Caco-2 (cell line): ENCODE measurements at regions of chr10 and their contacts with region 1.

Region 1: DNA sequence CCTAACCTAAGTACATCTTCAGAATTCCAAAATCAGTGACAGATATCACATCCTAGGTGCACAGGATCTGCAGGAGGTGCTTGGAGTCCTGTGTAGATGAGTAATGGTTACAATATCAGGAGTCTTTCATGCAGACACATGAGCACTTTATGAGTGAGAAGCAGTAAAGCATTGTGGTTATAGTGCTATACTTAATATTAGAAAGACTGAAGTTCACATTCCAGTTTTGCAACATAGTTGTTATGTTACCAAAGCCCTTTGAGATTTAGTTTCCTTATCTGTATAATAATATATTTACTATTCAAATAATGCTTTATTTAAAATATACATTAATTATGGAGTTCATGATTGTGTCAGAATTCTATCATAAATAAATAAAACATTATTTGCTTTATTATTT is 516.6 kb downstream of the NEBL start:
- DNase-seq: no peak
- H3K4me3 ChIP-seq: no peak overlapping the region
- H3K4me3 Mint-ChIP-seq: no peak overlapping the region
- H3K27ac Mint-ChIP-seq: no peak overlapping the region
- H3K4me1 ChIP-seq: no peaks in the 10 kb centered on the region
- H3K4me1 Mint-ChIP-seq: no peaks in the 10 kb centered on the region
- H3K27me3 ChIP-seq: no peaks in the 10 kb centered on the region; the same call in 1 of the 2 replicates
- H3K27me3 Mint-ChIP-seq: no peaks in the 10 kb centered on the region
- CTCF ChIP-seq: no peak

Region 2: GRCh38 chr10:20768843-20769242 is 388.4 kb after region 1 on chr10:
- CTCF ChIA-PET with region 1: no interaction called
- POLR2A ChIA-PET with region 1: no interaction called
- intact Hi-C with region 1: loop called (anchors 10 kb)
- DNase-seq: no peak
- H3K4me3 ChIP-seq: no peak overlapping the region
- H3K4me3 Mint-ChIP-seq: no peak overlapping the region
- H3K27ac Mint-ChIP-seq: no peak overlapping the region
- H3K4me1 ChIP-seq: no peaks in the 10 kb centered on the region
- H3K4me1 Mint-ChIP-seq: no peaks in the 10 kb centered on the region
- H3K27me3 ChIP-seq: no peaks in the 10 kb centered on the region
- H3K27me3 Mint-ChIP-seq: peaks cover 12% of the 10 kb centered on the region
- CTCF ChIP-seq: peak; percentile 19 to 22